KBM-7 (cell line): ENCODE measurements at regions of chr4 and their contacts with region 1.

Region 1: GRCh38 chr4:102449751-102450352 is 51.3 kb upstream of the NFKB1 start:
- DNase-seq: peak; percentile 68

Region 2: GRCh38 chr4:102268355-102268754 is 181.5 kb before region 1 on chr4:
- in situ Hi-C with region 1: no loop called
- DNase-seq: no peak

Region 3: DNA sequence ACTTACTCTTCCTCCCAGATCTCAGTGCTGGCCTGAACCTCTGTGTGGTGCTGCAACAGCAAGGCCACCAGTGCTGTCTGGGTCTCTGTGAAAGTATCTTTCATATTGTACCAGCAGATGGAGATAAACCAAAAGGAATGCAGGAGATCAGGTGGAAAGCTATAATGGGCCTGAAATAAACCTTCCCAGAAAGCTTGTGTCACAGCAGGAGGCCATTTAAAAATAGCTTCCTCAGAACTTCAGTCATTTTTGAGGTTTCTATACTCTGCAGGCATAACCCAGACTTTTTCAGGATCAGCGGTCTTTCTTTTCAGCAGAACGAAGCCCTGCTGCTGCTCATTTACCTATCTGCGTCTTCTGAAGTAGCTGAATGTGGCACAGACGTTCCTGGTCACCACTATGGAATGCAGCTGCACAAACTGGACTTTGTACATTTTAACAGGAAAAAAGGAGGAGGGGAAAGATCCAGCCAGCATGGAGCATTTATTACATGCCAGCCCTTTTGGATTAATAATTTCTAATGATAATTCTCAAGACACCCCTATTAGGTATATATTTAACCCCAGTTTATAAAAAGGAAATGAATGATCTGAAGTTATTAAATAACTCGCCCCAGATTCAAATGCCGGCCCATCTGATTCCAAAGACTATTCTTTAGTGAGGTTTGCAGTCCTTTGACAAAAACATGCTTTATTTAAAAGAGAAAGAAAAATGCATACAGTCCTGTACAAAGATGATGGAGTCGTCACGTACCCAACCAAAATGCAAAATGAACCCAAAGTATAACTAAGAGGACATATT is 171.0 kb after region 1 on chr4:
- in situ Hi-C with region 1: loop called (anchors 25 kb)
- DNase-seq: peak; percentile 90

Region 4: GRCh38 chr4:103019308-103020124 is 569.7 kb after region 1 on chr4 and contains the start of gene SLC9B1:
- in situ Hi-C with region 1: loop called (anchors 25 kb)
- DNase-seq: peak; percentile 95

Region 5: GRCh38 chr4:103099691-103100392 is 650.0 kb after region 1 on chr4 and contains the start of gene BDH2:
- in situ Hi-C with region 1: loop called (anchors 25 kb)
- DNase-seq: peak; percentile 87